Activated CD8-positive, alpha-beta T cell treated with anti-CD3 and anti-CD28 coated beads for 36 hours (primary cell): ENCODE measurements at regions of chr18 and their contacts with region 1.

Region 1: GRCh38 chr18:58761970-58762780 is 90.9 kb downstream of the MALT1 start:
- DNase-seq: no peak
- ATAC-seq: no peak
- H3K4me3 Mint-ChIP-seq: no peak overlapping the region
- H3K27ac Mint-ChIP-seq: no peak overlapping the region
- H3K4me1 Mint-ChIP-seq: peaks cover 21% of the 10 kb centered on the region
- H3K27me3 Mint-ChIP-seq: peaks cover 26% of the 10 kb centered on the region
- CTCF ChIP-seq: no peak

Region 2: GRCh38 chr18:58520969-58521368 is 241.2 kb before region 1 on chr18:
- CTCF ChIA-PET with region 1: interaction called, 405 read pairs
- POLR2A ChIA-PET with region 1: interaction called, 3 read pairs
- intact Hi-C with region 1: no loop called
- DNase-seq: peak; percentile 45
- ATAC-seq: peak; percentile 66
- H3K4me3 Mint-ChIP-seq: no peak overlapping the region
- H3K27ac Mint-ChIP-seq: no peak overlapping the region
- H3K4me1 Mint-ChIP-seq: peaks cover 22% of the 10 kb centered on the region
- H3K27me3 Mint-ChIP-seq: peaks cover 4% of the 10 kb centered on the region
- CTCF ChIP-seq: no peak

Region 3: DNA sequence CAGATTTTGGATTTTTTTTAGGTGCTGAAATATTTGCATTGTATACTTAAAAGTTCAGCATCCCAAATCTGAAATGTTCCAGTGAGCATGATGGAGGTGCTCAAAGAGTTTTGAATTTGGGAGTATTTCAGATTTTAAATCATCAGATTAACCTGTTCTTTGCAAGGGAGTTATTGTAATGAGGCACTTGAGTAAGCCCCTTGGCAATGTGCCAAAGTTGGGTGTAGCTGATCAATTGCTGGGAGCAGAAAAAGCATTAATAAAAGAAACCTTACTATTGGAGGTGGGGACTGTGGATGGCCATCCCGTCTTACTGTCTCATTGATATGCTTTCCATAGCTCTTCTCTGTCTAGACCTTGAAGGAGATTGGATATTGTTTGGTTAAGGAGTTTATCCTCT is 62.6 kb before region 1 on chr18:
- CTCF ChIA-PET with region 1: interaction called, 22 read pairs
- POLR2A ChIA-PET with region 1: no interaction called
- intact Hi-C with region 1: no loop called
- DNase-seq: no peak
- ATAC-seq: no peak
- H3K4me3 Mint-ChIP-seq: no peak overlapping the region
- H3K27ac Mint-ChIP-seq: no peak overlapping the region
- H3K4me1 Mint-ChIP-seq: peaks cover 49% of the 10 kb centered on the region
- H3K27me3 Mint-ChIP-seq: no peaks in the 10 kb centered on the region
- CTCF ChIP-seq: no peak

Region 4: GRCh38 chr18:58716060-58716756 is 46.0 kb before region 1 on chr18:
- CTCF ChIA-PET with region 1: interaction called, 10 read pairs
- POLR2A ChIA-PET with region 1: no interaction called
- intact Hi-C with region 1: no loop called
- DNase-seq: no peak
- ATAC-seq: peak; percentile 69
- H3K4me3 Mint-ChIP-seq: peak overlapping the region; percentile 31
- H3K27ac Mint-ChIP-seq: peak overlapping the region; percentile 91
- H3K4me1 Mint-ChIP-seq: peaks cover 60% of the 10 kb centered on the region
- H3K27me3 Mint-ChIP-seq: no peaks in the 10 kb centered on the region
- CTCF ChIP-seq: no peak

Region 5: GRCh38 chr18:58983260-58984155 is 221.3 kb after region 1 on chr18:
- CTCF ChIA-PET with region 1: no interaction called
- POLR2A ChIA-PET with region 1: no interaction called
- intact Hi-C with region 1: no loop called
- DNase-seq: no peak
- ATAC-seq: no peak
- H3K4me3 Mint-ChIP-seq: no peak overlapping the region
- H3K27ac Mint-ChIP-seq: no peak overlapping the region
- H3K4me1 Mint-ChIP-seq: no peaks in the 10 kb centered on the region
- H3K27me3 Mint-ChIP-seq: peaks cover 4% of the 10 kb centered on the region
- CTCF ChIP-seq: no peak

Region 6: DNA sequence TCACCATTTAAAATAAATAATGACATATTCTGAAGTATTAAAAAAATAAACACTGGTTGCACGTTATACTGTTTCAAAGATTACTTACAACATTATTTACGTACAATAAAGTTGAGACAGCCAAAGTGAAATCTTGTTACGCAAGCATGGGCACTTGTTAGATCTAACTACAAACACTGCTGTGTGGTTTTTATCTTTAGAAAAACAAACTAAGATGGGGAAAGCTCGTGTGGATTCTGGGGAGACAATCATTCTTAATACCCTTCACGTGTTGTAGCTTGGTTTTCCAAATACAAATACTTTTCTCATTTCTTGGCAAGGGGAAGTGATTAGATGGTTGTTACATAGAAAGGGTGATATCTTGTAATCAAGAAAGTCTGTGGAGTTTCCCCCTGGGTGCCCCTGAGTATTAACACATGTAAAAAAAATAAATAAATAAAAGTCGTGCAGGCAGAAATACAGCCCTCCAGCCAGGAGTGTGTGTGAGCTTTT is 722.7 kb after region 1 on chr18:
- CTCF ChIA-PET with region 1: no interaction called
- POLR2A ChIA-PET with region 1: no interaction called
- intact Hi-C with region 1: no loop called
- DNase-seq: no peak
- ATAC-seq: no peak
- H3K4me3 Mint-ChIP-seq: no peak overlapping the region
- H3K27ac Mint-ChIP-seq: no peak overlapping the region
- H3K4me1 Mint-ChIP-seq: no peaks in the 10 kb centered on the region
- H3K27me3 Mint-ChIP-seq: peaks cover 2% of the 10 kb centered on the region
- CTCF ChIP-seq: no peak